AG04449 (cell line): ENCODE measurements at regions of chr11 and their contacts with region 1.

Region 1: GRCh38 chr11:34357701-34358257 is at the start of gene ABTB2:
- DNase-seq: peak; percentile 72
- H3K4me3 ChIP-seq: peak within 1 kb of the TSS; percentile 56
- CTCF ChIP-seq: no peak

Region 2: DNA sequence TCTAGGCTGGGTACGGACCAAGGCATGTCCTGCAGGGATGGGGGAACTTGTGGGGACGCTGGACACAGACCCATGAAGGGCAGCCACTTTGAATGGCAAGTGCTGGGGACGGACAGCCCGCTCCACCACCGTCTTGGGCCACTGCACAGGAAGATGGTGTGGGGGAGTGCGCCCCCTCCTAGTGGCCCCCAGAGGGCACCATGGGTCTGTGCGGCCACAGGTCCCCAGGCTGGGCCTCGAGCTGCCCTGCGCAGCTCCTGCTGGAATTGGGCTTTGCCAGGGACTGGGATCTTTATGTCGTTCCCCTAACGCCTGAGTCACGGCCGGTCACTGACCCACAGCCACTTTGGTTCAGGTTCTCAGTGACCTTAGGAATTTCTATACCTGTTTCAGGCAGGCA is 208.0 kb before region 1 on chr11:
- CTCF ChIA-PET with region 1: interaction called, 14 read pairs
- POLR2A ChIA-PET with region 1: no interaction called
- DNase-seq: no peak
- H3K4me3 ChIP-seq: no peak overlapping the region
- CTCF ChIP-seq: peak; percentile 69

Region 3: GRCh38 chr11:34165518-34166277 is 192.1 kb before region 1 on chr11:
- CTCF ChIA-PET with region 1: interaction called, 193 read pairs
- POLR2A ChIA-PET with region 1: interaction called, 7 read pairs
- DNase-seq: no peak
- H3K4me3 ChIP-seq: no peak overlapping the region
- CTCF ChIP-seq: no peak

Region 4: GRCh38 chr11:34335331-34335730 is 22.4 kb before region 1 on chr11:
- CTCF ChIA-PET with region 1: no interaction called
- POLR2A ChIA-PET with region 1: no interaction called
- DNase-seq: no peak
- H3K4me3 ChIP-seq: no peak overlapping the region
- CTCF ChIP-seq: no peak